Naive thymus-derived CD4-positive, alpha-beta T cell (primary cell): ENCODE measurements at regions of chr2 and their contacts with region 1.

Region 1: DNA sequence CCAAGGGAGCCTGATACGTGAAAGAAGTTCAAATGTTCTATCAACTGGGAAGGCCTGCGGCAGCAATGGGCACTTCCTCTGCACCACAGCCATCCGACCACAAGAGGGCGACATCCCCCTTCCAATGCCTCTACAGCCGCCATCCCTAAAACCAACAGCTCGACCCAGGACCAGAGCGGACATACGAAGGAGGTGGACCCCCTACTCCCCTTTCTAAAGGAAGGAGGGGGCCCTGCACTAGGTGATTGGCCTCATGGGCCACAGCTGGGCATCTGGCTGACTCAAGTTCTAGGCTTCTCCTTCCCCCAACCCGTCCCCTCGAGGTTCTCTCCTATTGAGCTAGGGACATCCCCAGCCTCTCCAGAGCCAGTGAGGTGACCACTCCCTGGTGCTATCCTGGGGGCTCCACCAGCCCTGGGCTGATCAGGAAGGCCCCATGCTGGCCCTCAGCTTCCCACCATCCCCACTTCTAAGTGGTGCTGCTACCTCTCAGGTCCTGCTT is 217.2 kb downstream of the TNS1 start:
- DNase-seq: peak; percentile 43 to 77 (median 64)
- ATAC-seq: peak; percentile 77
- H3K4me3 ChIP-seq: no peak overlapping the region
- H3K4me3 Mint-ChIP-seq: peak overlapping the region in 5 of 10 donors; percentile 2 to 32 (median 16)
- H3K27ac ChIP-seq: no peak overlapping the region
- H3K27ac Mint-ChIP-seq: peak overlapping the region in 1 of 9 donors; percentile 59
- H3K4me1 ChIP-seq: peaks cover 5% of the 10 kb centered on the region in 2 donors
- H3K4me1 Mint-ChIP-seq: peaks cover 4 to 35% (median 25%) of the 10 kb centered on the region in 7 donors
- H3K27me3 ChIP-seq: no peaks in the 10 kb centered on the region
- H3K27me3 Mint-ChIP-seq: peaks cover 0 to 15% (median 4%) of the 10 kb centered on the region in 5 donors

Region 2: DNA sequence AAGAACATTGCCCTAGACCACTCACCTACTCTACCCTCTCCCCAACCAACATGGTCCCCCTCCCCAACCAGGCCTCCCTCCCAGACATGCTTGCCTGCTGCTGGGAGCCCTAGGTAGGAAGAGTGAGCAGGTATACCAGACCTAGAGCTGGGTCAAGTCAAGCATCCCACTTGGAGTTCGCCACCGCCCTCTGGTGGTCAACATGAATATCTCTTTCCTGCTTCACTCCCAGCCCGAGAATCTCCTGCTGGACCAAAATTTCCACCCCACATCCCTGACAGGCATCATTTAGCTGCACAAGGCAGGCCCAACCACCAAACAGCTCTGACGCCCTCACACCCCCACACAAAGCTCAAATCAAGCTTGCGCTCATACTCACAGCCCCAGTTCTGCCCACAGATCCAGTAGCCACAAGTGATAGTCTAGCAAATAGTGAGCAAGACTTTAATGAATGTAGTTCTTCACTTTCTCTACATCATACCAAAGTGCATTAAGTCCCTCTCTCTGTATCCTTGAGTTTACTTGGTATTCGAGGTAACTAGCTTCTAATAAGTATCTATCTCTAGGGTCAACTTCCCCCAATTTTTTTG is 101.2 kb after region 1 on chr2:
- CTCF ChIA-PET with region 1: interaction called, 28 read pairs
- POLR2A ChIA-PET with region 1: no interaction called
- intact Hi-C with region 1: loop called (anchors 1 kb)
- DNase-seq: peak; percentile 11 to 58 (median 41)
- ATAC-seq: peak; percentile 69
- H3K4me3 ChIP-seq: no peak overlapping the region
- H3K4me3 Mint-ChIP-seq: no peak overlapping the region
- H3K27ac ChIP-seq: no peak overlapping the region
- H3K27ac Mint-ChIP-seq: no peak overlapping the region
- H3K4me1 ChIP-seq: no peaks in the 10 kb centered on the region
- H3K4me1 Mint-ChIP-seq: peaks cover 0 to 4% (median 0%) of the 10 kb centered on the region in 7 donors
- H3K27me3 ChIP-seq: no peaks in the 10 kb centered on the region
- H3K27me3 Mint-ChIP-seq: peaks cover 0 to 9% (median 0%) of the 10 kb centered on the region in 5 donors

Region 3: DNA sequence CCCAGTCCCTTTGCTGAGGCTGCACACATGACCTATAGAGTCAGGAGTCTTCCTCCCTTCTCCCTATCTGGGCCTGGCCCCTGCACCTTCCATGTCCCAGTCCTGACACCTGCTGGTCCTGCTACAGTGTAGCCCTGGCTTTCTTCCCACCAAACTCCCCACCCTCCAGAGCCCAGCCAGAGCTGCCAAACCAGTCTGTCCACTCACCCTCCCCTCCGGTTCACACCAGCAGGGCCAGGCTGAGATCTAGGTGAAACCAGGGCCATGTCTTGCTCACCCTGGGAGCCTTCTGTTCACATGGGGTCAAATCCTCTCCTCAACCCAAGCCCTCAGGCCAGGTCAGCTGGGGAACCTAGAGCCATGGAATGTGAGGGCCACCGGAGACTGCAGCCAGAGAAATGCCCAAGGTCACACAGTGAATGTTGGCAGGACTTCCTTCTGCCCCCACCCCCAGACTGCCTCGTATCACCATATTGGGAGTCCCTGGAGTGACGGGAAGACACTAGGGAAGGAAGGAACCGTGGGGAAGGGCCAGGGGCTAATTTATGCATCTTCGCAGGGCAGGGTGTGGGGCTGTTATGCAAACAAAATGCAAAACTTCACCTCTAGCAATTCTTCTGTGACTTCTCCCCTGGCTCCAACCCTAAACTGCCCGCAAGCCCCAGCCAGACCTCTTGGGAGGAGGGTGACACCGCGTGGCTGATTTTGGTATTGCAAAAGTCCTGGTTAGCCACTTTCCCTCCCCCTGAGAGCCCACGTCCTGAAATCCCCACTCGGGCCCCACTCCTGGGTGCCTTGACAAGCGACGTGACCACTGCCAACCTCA is 202.6 kb after region 1 on chr2:
- CTCF ChIA-PET with region 1: interaction called, 3 read pairs
- POLR2A ChIA-PET with region 1: no interaction called
- intact Hi-C with region 1: loop called (anchors 1 kb)
- DNase-seq: peak in 7 of 9 donors; percentile 14 to 74 (median 31)
- ATAC-seq: peak; percentile 77
- H3K4me3 ChIP-seq: no peak overlapping the region
- H3K4me3 Mint-ChIP-seq: no peak overlapping the region
- H3K27ac ChIP-seq: no peak overlapping the region
- H3K27ac Mint-ChIP-seq: no peak overlapping the region
- H3K4me1 ChIP-seq: no peaks in the 10 kb centered on the region
- H3K4me1 Mint-ChIP-seq: peaks cover 0 to 10% (median 0%) of the 10 kb centered on the region in 7 donors
- H3K27me3 ChIP-seq: no peaks in the 10 kb centered on the region
- H3K27me3 Mint-ChIP-seq: peaks cover 2 to 11% (median 7%) of the 10 kb centered on the region in 5 donors

Region 4: DNA sequence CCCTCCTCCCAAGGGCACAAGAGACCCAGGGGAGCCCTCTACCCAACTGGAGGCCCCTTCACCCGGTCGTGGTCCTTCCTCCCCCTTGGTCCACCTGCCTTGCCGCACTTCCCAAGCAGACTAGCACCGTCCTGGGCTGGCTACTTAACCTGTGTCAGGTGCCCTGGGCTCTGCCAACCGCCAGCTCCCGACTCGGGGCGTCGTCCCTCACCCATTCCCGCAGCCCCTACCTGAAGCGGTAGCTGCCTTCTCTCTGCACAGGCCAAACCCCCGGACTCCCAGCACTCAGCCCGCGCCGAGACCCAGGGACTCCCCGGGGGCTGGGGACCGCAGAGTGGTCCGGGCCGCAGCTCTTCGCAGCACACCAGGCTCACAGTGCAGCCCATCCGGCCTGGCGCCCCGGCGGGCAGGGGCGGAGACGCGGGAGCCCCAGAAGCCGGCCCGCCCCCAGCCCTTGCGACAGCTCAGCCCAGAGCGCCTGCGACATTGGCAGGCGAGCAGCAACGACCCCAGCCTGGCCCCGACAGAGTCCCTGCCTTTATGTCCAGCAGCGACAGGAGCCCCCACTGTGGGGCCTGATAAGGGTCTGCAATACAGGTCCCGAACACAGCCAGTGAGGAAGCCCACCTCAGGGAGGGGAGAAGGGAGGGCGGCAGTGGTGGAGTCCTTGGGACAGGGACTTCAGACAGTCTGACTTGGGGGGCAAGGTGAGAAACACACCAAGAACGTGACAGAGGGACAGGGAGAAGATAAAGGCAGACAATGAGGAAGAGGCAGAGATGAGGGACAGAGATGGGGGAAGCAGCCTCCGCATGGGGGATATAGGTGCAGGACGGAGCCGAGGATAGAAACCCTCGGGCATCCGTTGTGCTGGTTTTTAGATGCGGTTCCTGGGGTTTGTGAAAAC is 248.2 kb after region 1 on chr2:
- CTCF ChIA-PET with region 1: interaction called, 10 read pairs
- POLR2A ChIA-PET with region 1: no interaction called
- intact Hi-C with region 1: loop called (anchors 1 kb)
- DNase-seq: peak in 3 of 9 donors; percentile 3 to 21 (median 14)
- ATAC-seq: peak; percentile 16
- H3K4me3 ChIP-seq: peak overlapping the region; percentile 33
- H3K4me3 Mint-ChIP-seq: peak overlapping the region; percentile 51 to 85 (median 78)
- H3K27ac ChIP-seq: no peak overlapping the region
- H3K27ac Mint-ChIP-seq: peak overlapping the region in 6 of 9 donors; percentile 55 to 83 (median 76)
- H3K4me1 ChIP-seq: peaks cover 0 to 4% of the 10 kb centered on the region in 2 donors
- H3K4me1 Mint-ChIP-seq: peaks cover 0 to 15% (median 8%) of the 10 kb centered on the region in 7 donors
- H3K27me3 ChIP-seq: no peaks in the 10 kb centered on the region
- H3K27me3 Mint-ChIP-seq: peaks cover 0 to 4% (median 4%) of the 10 kb centered on the region in 5 donors

Region 5: GRCh38 chr2:218051908-218052307 is 266.3 kb after region 1 on chr2:
- CTCF ChIA-PET with region 1: no interaction called
- POLR2A ChIA-PET with region 1: no interaction called
- intact Hi-C with region 1: loop called in 1 of 2 experiments (anchors 5 kb)
- DNase-seq: no peak
- ATAC-seq: no peak
- H3K4me3 ChIP-seq: no peak overlapping the region
- H3K4me3 Mint-ChIP-seq: no peak overlapping the region
- H3K27ac ChIP-seq: no peak overlapping the region
- H3K27ac Mint-ChIP-seq: no peak overlapping the region
- H3K4me1 ChIP-seq: no peaks in the 10 kb centered on the region
- H3K4me1 Mint-ChIP-seq: no peaks in the 10 kb centered on the region
- H3K27me3 ChIP-seq: peaks cover 0 to 3% of the 10 kb centered on the region in 2 donors
- H3K27me3 Mint-ChIP-seq: peaks cover 12 to 32% (median 24%) of the 10 kb centered on the region in 5 donors

Region 6: GRCh38 chr2:218063486-218063885 is 277.9 kb after region 1 on chr2:
- CTCF ChIA-PET with region 1: interaction called, 5 read pairs
- POLR2A ChIA-PET with region 1: no interaction called
- intact Hi-C with region 1: loop called (anchors 1 kb)
- DNase-seq: no peak
- ATAC-seq: peak; percentile 88
- H3K4me3 ChIP-seq: no peak overlapping the region
- H3K4me3 Mint-ChIP-seq: no peak overlapping the region
- H3K27ac ChIP-seq: no peak overlapping the region
- H3K27ac Mint-ChIP-seq: no peak overlapping the region
- H3K4me1 ChIP-seq: peaks cover 0 to under 1% of the 10 kb centered on the region in 2 donors
- H3K4me1 Mint-ChIP-seq: peaks cover 0 to 14% (median under 1%) of the 10 kb centered on the region in 7 donors
- H3K27me3 ChIP-seq: no peaks in the 10 kb centered on the region
- H3K27me3 Mint-ChIP-seq: peaks cover 4 to 20% (median 19%) of the 10 kb centered on the region in 5 donors

Region 7: DNA sequence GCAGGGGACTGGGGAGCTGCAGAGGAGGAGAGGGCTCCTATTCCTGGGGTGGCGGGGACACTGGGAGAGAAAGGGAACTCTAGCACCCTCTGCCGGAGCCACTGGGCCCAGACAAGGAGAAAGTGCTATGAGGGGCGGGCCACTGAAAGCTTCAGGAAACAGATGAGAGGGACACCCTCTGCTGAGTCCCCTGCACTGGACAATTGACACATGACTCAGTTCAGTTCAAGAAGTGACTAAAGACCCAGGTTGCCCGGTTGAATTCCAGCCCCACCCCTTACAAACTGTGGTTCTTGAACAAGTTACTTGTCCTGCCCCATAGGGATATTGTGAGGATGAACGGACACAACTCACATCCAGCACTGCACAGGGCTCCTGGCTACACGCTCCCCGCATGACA is 288.4 kb after region 1 on chr2:
- CTCF ChIA-PET with region 1: interaction called, 5 read pairs
- POLR2A ChIA-PET with region 1: no interaction called
- intact Hi-C with region 1: loop called in 1 of 2 experiments (anchors 1 kb)
- DNase-seq: no peak
- ATAC-seq: peak; percentile 72
- H3K4me3 ChIP-seq: no peak overlapping the region
- H3K4me3 Mint-ChIP-seq: no peak overlapping the region
- H3K27ac ChIP-seq: no peak overlapping the region
- H3K27ac Mint-ChIP-seq: no peak overlapping the region
- H3K4me1 ChIP-seq: peaks cover 0 to 2% of the 10 kb centered on the region in 2 donors
- H3K4me1 Mint-ChIP-seq: peaks cover 0 to 6% (median 0%) of the 10 kb centered on the region in 7 donors
- H3K27me3 ChIP-seq: no peaks in the 10 kb centered on the region
- H3K27me3 Mint-ChIP-seq: no peaks in the 10 kb centered on the region